ENCODE measurements at regions of chr4 and their contacts with region 1.

Region 1: DNA sequence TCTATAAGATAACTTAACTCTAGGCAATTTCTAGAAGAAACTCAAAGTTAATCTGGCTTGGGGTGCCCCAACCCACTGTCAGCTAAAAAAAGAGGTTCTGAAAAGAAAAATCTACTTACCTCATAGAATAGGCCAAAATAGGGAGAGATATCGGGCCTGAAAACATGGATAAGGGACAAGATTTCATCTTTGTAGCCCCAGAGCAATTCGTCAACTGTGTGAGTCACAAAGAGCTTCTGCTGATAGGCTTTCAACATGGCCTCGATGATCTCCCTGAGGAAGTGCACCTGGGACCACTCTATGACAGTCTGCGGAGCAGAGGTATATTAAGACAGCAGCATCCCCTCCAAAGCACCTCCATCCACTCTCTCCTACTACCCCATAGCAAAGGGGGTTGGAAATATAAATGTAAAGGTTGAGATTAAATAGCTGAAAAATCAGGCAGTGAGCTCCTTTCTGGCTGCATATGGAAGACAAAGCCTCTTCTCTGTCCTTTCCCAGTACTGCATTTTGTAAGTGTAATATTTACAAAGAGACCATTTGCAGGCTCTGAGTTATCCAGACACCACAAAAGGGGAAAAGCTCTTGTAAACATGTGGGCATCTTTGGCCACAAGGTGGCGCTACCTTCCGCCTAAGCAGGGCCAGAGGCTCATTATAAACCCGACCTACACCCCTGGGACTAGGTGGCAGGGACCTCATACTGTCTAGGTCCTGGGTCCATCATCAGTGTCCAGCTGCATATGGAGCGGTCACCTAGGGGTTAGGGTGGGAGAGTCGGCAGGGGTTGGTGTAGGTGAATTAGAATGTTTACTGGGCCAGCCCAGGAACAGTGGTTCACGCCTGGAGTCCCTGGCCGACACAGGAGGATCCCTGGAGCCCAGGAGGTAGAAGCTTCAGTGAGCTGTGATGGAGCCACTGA is 31.5 kb upstream of the NUP54 start:
- DNase-seq: peak; percentile 84
- ATAC-seq: peak; percentile 94
- H3K4me3 ChIP-seq: no peak overlapping the region
- H3K27ac ChIP-seq: no peak overlapping the region
- H3K4me1 ChIP-seq: no peaks in the 10 kb centered on the region
- H3K27me3 ChIP-seq: no peaks in the 10 kb centered on the region
- CTCF ChIP-seq: peak; percentile 87

Region 2: DNA sequence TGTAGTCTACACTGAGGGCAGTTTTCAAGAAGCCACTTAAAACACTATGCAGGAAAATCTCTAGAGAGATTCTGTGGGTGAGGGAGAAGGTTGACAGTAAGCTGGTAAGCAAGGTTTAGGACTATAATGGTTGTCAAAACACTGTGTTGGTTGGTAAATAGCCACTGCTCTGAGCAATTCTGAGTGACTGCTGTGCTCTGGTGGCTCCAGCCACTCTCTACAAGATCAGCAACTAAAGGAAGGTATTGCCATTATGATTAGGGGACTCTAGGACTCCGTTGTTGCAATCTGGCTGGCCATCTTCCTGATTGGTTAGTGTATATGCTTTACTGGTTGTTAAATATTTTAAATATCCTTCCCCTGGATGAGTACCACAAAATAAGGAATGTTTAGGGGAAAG is 66.4 kb after region 1 on chr4:
- CTCF ChIA-PET with region 1: interaction called, 4 read pairs
- POLR2A ChIA-PET with region 1: no interaction called
- intact Hi-C with region 1: loop called (anchors 1 kb)
- DNase-seq: no peak
- ATAC-seq: peak; percentile 37; the same call in 1 of the 2 replicates
- H3K4me3 ChIP-seq: no peak overlapping the region
- H3K27ac ChIP-seq: no peak overlapping the region
- H3K4me1 ChIP-seq: peaks cover 5% of the 10 kb centered on the region; the same call in 1 of the 2 replicates
- H3K27me3 ChIP-seq: no peaks in the 10 kb centered on the region
- CTCF ChIP-seq: no peak

Region 3: DNA sequence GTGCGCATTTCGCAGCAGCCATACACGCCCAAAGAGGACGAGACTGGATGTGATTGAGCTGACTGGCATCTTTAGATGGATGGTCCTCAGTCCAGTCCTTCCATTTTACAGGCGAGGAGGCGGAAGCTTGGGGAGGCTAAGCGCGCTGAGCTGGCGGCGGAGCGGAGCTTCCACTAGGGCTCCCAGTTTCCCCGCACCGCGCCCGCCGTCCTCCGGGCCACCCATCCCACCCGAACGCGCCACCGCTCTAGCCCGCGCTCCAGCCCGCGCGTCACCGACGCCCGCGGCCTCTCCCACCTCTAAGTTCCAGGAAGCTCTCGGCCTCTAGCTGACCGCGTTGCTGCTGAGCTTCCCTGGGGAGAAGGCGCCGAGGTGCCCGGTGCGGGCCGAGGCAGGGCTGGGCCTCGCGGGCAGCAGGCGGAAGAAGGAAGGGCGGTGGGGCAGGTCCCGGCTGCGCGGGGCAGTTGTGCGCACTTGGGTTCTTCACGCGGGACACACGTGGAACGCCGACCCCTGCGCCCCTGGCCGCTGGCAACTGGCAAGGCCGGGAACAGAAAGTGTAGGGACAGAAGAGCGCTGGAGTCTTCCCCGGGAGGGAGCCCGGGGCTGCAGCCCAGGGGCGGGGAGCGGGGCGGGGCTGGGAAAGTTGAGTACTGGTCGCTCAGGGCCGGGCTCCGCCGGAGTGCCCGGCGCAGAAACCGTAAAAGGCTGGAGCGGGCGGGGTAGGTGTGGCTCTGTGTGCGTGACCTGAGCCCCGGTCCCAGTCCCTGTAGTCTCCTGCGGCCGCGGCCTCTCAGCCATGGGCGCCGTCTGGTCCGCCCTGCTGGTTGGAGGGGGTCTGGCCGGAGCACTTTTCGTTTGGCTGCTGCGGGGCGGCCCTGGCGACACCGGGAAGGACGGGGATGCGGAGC is 126.6 kb after region 1 on chr4 and contains the start of gene STBD1:
- CTCF ChIA-PET with region 1: interaction called, 5 read pairs
- POLR2A ChIA-PET with region 1: no interaction called
- intact Hi-C with region 1: loop called (anchors 1 kb)
- DNase-seq: peak; percentile 71
- ATAC-seq: peak; percentile 79
- H3K4me3 ChIP-seq: peak within 1 kb of the TSS; percentile 99
- H3K27ac ChIP-seq: peak within 1 kb of the TSS; percentile 83
- H3K4me1 ChIP-seq: peaks cover 29% of the 10 kb centered on the region
- H3K27me3 ChIP-seq: no peaks in the 10 kb centered on the region
- CTCF ChIP-seq: no peak
- total RNA-seq, gene STBD1: 7.3 and 10.9 TPM in 2 replicates

Region 4: DNA sequence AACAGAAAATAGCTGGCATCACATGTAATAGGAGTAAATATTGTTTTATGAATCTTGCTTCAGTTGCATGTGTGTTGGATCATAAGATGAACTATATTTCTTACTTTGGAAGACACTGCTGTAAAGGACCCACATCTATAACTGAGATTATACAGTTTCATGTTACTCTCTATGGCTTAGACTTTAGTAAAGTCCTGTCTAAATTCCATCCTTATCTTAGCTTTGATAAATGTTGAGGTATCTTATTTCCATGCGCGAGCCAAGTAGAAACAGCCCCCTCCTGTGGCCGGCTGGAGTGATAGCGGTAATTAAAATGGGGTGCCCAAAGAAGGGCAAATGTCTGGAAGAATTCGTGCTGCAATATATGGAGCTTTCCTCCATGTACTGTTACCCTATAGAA is 198.3 kb after region 1 on chr4:
- CTCF ChIA-PET with region 1: interaction called, 4 read pairs
- POLR2A ChIA-PET with region 1: no interaction called
- intact Hi-C with region 1: loop called (anchors 2 kb)
- DNase-seq: peak; percentile 36
- ATAC-seq: no peak
- H3K4me3 ChIP-seq: no peak overlapping the region
- H3K27ac ChIP-seq: no peak overlapping the region
- H3K4me1 ChIP-seq: peaks cover 20% of the 10 kb centered on the region
- H3K27me3 ChIP-seq: no peaks in the 10 kb centered on the region
- CTCF ChIP-seq: peak; percentile 65

Region 5: GRCh38 chr4:76430519-76431388 is 251.1 kb after region 1 on chr4:
- CTCF ChIA-PET with region 1: no interaction called
- POLR2A ChIA-PET with region 1: no interaction called
- intact Hi-C with region 1: loop called (anchors 1 kb)
- DNase-seq: peak; percentile 71
- ATAC-seq: peak; percentile 43
- H3K4me3 ChIP-seq: peak overlapping the region; percentile 37; the same call in 1 of the 2 replicates
- H3K27ac ChIP-seq: no peak overlapping the region
- H3K4me1 ChIP-seq: 0 out of 2 replicates have a peak, but pooled peaks cover 3% of the 10 kb centered on the region
- H3K27me3 ChIP-seq: no peaks in the 10 kb centered on the region
- CTCF ChIP-seq: peak; percentile 76

Region 6: DNA sequence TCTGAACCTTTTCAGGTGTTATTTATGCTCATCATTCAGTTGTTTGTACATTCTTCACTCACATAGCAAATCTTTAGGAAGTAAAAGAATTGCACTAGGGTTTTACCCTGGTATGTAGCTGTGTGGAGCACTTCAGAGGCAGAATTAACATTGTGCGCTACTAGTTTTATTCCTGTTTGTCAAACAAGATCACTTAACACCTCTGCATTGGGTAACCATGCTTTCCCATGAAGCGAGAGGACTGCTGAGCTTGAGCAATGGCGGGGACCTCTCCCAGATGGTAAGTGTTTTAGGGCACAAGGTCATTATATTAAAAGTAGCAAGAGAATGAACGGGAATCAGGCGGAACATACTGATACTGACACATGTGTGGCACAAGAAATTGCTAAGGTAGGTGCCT is 314.6 kb after region 1 on chr4:
- CTCF ChIA-PET with region 1: no interaction called
- POLR2A ChIA-PET with region 1: no interaction called
- intact Hi-C with region 1: no loop called
- DNase-seq: no peak
- ATAC-seq: no peak
- H3K4me3 ChIP-seq: no peak overlapping the region
- H3K27ac ChIP-seq: no peak overlapping the region
- H3K4me1 ChIP-seq: no peaks in the 10 kb centered on the region
- H3K27me3 ChIP-seq: no peaks in the 10 kb centered on the region
- CTCF ChIP-seq: no peak

Region 7: GRCh38 chr4:76504613-76505465 is 325.2 kb after region 1 on chr4:
- CTCF ChIA-PET with region 1: interaction called, 5 read pairs
- POLR2A ChIA-PET with region 1: no interaction called
- intact Hi-C with region 1: loop called (anchors 5 kb)
- DNase-seq: peak; percentile 61
- ATAC-seq: peak; percentile 46
- H3K4me3 ChIP-seq: no peak overlapping the region
- H3K27ac ChIP-seq: no peak overlapping the region
- H3K4me1 ChIP-seq: no peaks in the 10 kb centered on the region
- H3K27me3 ChIP-seq: no peaks in the 10 kb centered on the region
- CTCF ChIP-seq: peak; percentile 73